AG04449 (cell line): ENCODE measurements at regions of chr15 and their contacts with region 1.

Region 1: DNA sequence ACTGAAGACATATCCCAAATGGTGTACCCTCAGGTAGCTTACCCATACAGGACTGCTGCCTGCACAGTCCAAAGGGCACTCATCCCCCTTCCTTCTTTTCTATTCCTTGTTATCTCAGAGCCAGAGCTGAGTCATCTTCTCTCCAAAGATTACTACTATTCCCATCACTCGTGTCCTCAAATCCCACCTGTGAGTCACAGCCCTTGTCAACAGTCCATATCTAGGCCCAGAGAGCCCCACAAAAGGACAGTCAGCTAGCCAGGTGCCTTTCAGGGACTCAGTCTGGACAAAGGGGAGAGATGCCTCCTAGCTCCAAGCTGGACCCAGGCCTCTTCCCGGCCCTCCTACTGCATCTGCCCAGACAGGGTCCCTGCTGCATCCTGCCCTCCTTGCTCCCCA is 11.0 kb downstream of the PARP16 start:
- DNase-seq: no peak
- H3K4me3 ChIP-seq: no peak overlapping the region
- CTCF ChIP-seq: no peak

Region 2: DNA sequence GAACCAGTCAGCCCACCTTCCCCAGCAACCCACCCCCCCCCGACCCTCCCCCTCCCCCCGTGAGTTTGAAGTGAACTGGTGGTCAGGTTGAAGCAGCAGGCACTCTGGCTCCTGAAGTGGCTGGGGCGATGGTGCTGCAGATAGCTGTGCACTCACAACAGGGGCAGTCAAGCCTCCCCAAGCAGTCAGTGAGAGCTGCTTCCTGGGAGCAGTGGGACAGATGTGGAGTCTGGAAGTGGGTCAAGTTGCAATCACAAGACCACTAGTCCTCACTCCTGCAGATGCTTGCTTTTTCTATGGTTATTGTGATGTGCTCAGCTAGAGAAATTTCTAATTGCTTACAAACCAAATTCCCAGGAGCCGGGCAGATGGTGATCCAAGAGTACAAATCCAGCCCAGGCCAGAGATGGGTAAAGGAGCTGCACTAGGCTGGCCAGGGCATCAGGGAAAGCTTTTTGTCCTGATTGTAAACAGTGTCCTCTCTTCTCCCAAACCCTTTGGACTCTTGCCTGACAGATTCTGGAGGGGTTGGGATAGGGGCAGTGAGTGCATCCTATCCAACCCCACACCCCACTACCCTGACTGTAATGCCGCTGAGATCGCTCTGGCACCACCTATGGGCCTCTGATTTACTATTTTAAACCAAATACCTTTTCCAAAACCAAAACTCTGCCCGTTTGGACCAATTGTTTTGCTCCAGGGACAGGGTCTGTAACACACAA is 80.7 kb before region 1 on chr15:
- CTCF ChIA-PET with region 1: interaction called, 208 read pairs
- POLR2A ChIA-PET with region 1: no interaction called
- DNase-seq: no peak
- H3K4me3 ChIP-seq: no peak overlapping the region
- CTCF ChIP-seq: no peak

Region 3: GRCh38 chr15:65245096-65245856 is 30.5 kb before region 1 on chr15:
- CTCF ChIA-PET with region 1: interaction called, 15 read pairs
- POLR2A ChIA-PET with region 1: no interaction called
- DNase-seq: no peak
- H3K4me3 ChIP-seq: no peak overlapping the region
- CTCF ChIP-seq: no peak

Region 4: DNA sequence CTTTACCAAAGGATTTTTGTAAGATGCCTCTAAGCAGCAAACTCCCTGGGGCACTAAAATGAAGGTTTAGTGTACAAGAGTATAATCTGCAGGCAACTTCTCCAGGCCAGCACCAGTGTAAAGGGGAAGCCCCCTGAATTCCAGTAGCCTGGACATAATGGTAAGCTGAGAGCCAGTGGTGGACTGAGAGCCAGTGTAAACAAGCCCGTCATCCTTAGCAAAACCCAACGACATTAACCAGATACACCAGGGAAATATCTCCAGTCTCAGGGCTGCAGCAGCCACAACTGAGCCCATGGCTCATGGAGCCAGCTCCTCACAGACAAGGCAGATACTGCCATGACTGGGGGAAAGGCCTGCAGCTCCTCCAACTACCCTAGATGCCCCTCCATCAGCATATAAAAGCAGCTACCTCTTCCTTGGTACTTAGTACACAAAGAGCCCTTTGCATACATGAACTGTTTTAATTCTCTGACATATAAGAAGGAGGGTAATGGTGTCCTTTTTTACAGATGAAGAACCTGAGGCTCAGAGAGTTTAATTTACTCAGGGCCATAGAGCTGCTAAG is 10.8 kb before region 1 on chr15:
- CTCF ChIA-PET with region 1: interaction called, 49 read pairs
- POLR2A ChIA-PET with region 1: no interaction called
- DNase-seq: no peak
- H3K4me3 ChIP-seq: no peak overlapping the region
- CTCF ChIP-seq: no peak

Region 5: GRCh38 chr15:65304389-65305144 is 28.8 kb after region 1 on chr15 and contains the start of gene RNU5B-1:
- CTCF ChIA-PET with region 1: interaction called, 3 read pairs
- POLR2A ChIA-PET with region 1: interaction called, 10 read pairs
- DNase-seq: peak; percentile 96
- H3K4me3 ChIP-seq: peak within 1 kb of the TSS; percentile 56
- CTCF ChIP-seq: peak; percentile 85